Activated naive CD8-positive, alpha-beta T cell treated with anti-CD3 and anti-CD28 coated beads, Interleukin-2, amount 10 ng/mL, durations not matched to agents 7 days and 5 days (primary cell): ENCODE measurements at regions of chr1 and their contacts with region 1.

Region 1: DNA sequence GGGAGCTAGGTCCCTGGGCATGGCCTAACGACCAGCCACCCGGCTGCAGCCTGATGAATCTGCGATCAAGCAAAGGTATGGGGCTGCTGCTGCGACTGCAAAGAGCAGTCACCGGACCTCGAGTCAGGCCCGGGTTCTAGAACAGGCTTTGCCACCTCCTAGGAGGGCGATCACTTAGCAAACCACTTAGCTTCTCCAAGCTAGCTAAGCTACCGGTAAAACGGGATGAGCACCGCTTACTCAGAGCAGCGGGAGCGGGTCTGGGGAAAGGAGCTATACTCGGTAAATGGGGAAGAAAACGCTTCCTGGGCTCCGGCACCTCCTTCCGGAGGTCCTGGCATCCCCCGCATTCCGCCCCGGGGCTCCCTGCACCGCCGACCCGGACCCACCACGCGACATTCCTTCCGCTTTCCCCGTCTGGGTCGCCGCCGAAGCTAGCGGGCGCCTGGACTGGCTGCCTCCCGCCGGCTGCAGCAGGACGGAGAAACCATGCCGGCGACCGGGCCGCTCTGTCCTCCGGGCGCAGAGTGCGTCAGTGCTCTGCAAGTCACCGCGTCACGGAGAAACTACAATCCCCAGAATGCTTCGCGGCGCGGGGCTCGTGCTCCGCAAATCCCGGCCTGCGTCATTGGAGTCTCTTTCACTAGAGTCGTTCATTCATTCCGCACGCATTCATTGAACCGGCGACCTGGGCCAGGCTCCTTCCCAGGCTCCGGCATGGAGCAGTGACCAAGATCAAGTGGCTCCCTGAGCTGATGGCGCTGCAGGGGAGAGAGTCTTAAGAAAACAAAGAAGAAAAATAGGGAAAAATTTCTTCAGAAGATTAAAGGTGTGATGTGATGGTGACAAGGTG is at the start of gene LSM10:
- DNase-seq: peak; percentile 90
- ATAC-seq: peak; percentile 91
- H3K4me3 Mint-ChIP-seq: peak within 1 kb of the TSS; percentile 97
- H3K27ac Mint-ChIP-seq: peak within 1 kb of the TSS; percentile 97
- H3K4me1 Mint-ChIP-seq: peaks cover 17% of the 10 kb centered on the region
- H3K27me3 Mint-ChIP-seq: no peaks in the 10 kb centered on the region
- total RNA-seq, gene LSM10: 44.1 to 45.1 TPM

Region 2: GRCh38 chr1:36369061-36369861 is 28.3 kb before region 1 on chr1:
- POLR2A ChIA-PET with region 1: interaction called, 14 read pairs
- DNase-seq: peak; percentile 84
- ATAC-seq: peak; percentile 21
- H3K4me3 Mint-ChIP-seq: no peak overlapping the region
- H3K27ac Mint-ChIP-seq: peak overlapping the region; percentile 26
- H3K4me1 Mint-ChIP-seq: peaks cover 56% of the 10 kb centered on the region
- H3K27me3 Mint-ChIP-seq: no peaks in the 10 kb centered on the region

Region 3: GRCh38 chr1:36831181-36831810 is 433.7 kb after region 1 on chr1:
- POLR2A ChIA-PET with region 1: no interaction called
- DNase-seq: no peak
- ATAC-seq: no peak
- H3K4me3 Mint-ChIP-seq: no peak overlapping the region
- H3K27ac Mint-ChIP-seq: no peak overlapping the region
- H3K4me1 Mint-ChIP-seq: no peaks in the 10 kb centered on the region
- H3K27me3 Mint-ChIP-seq: peaks cover 10% of the 10 kb centered on the region